ENCODE measurements at regions of chr12 and their contacts with region 1.

Region 1: DNA sequence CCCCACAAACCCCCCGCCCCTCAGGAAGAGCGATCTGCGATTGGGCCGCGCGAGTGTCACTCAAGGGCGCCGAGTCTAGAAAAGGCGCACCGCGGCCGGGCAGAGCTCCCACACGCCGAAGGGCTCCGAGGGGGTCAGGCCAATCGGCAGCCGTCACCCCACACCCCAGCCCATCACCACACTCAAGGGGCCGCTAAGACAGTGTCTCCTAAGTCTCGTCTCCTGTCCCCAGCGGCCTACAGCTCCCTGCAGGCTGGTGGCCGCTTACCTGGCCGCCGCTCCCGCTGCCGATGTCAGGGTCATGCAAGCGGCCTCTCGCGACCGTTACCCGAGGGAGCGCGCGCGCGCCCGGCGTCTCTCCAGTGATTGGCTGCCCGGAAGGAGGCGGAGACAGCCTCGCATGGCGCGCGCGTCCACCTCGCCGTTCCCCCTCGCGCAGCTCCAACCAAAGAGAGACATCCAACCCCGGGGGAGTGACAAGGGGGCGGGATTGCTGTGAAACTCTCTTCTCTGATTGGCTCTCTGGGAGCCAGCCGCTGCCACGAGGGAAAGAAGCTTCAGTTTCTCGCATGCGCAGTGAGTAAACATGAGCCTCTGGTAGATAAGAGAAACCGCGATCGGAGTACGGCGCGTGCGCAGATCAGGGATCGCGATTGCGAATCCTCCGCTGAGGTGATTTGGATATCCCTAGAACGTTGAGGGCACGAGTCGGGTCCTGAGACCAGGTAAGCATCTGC is at the starts of genes MPHOSPH9 and MTRFR:
- DNase-seq: peak; percentile 100
- ATAC-seq: peak; percentile 90
- H3K4me3 ChIP-seq: peak within 1 kb of the TSS; percentile 88 to 99 (median 96)
- H3K4me3 Mint-ChIP-seq: peak within 1 kb of the TSS; percentile 92
- H3K27ac ChIP-seq: peak within 1 kb of the TSS; percentile 84 to 93
- H3K27ac Mint-ChIP-seq: peak within 1 kb of the TSS; percentile 95
- H3K4me1 ChIP-seq: peaks cover 53 to 61% of the 10 kb centered on the region in 2 donors
- H3K4me1 Mint-ChIP-seq: peaks cover 67% of the 10 kb centered on the region
- H3K27me3 ChIP-seq: no peaks in the 10 kb centered on the region
- H3K27me3 Mint-ChIP-seq: no peaks in the 10 kb centered on the region
- CTCF ChIP-seq: no peak
- total RNA-seq, gene MPHOSPH9: 40.4 and 45.1 TPM in 2 replicates
- total RNA-seq, gene MTRFR: 45.5 and 49.0 TPM in 2 replicates

Region 2: DNA sequence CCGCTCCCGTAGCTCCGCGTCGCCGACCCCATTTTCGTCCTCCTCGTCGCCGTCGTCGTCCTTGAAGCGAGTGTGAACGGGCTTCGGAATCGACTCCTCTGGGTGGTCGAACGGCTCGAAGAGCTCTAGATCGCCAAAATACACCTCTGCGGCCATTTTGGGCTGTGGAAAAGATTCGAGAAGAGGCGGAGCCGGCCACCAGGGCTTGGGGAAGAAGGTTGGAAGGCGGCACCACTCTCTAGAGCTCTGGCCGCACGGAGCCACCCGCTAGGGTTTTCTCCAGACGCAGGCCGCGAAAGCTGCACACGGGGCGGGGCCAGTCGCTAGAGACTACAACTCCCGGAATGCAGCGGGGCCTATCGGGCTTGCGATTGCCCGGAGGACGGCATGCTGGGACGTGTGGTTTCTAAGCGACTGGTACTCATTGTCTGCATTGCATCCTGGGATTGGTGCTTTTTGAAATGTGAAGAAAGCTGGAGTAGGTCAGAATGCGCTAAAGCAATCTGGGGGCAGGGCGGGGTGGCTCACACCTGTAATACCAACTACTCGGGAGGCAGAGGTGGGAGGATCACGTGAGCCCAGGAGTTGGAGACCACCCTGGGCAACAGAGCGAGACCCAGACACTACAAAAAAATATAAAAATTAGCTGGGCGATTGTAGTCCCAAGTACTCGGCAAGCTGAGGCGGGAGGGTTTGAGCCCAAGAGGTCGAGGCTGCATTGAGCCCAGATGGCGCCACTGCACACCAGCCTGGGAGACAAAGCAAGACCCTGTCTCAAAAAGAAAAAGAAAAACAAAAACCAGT is 732.1 kb before region 1 on chr12 and contains the start of gene ZCCHC8:
- CTCF ChIA-PET with region 1: no interaction called
- POLR2A ChIA-PET with region 1: interaction called, 14 read pairs
- intact Hi-C with region 1: loop called (anchors 1 kb)
- DNase-seq: peak; percentile 97
- ATAC-seq: peak; percentile 91
- H3K4me3 ChIP-seq: peak within 1 kb of the TSS; percentile 71 to 93 (median 84)
- H3K4me3 Mint-ChIP-seq: peak within 1 kb of the TSS; percentile 83
- H3K27ac ChIP-seq: peak within 1 kb of the TSS; percentile 79 to 93
- H3K27ac Mint-ChIP-seq: peak within 1 kb of the TSS; percentile 87
- H3K4me1 ChIP-seq: peaks cover 15 to 30% of the 10 kb centered on the region in 2 donors
- H3K4me1 Mint-ChIP-seq: peaks cover 36% of the 10 kb centered on the region
- H3K27me3 ChIP-seq: no peaks in the 10 kb centered on the region
- H3K27me3 Mint-ChIP-seq: no peaks in the 10 kb centered on the region
- CTCF ChIP-seq: no peak
- total RNA-seq, gene ZCCHC8: 56.2 and 57.0 TPM in 2 replicates

Region 3: GRCh38 chr12:122860346-122861090 is 372.5 kb before region 1 on chr12:
- CTCF ChIA-PET with region 1: interaction called, 18 read pairs
- POLR2A ChIA-PET with region 1: interaction called, 5 read pairs
- intact Hi-C with region 1: loop called (anchors 5 kb)
- DNase-seq: peak; percentile 86
- ATAC-seq: peak; percentile 59
- H3K4me3 ChIP-seq: no peak overlapping the region
- H3K4me3 Mint-ChIP-seq: no peak overlapping the region
- H3K27ac ChIP-seq: peak overlapping the region in 1 of 2 donors; percentile 43
- H3K27ac Mint-ChIP-seq: peak overlapping the region; percentile 73
- H3K4me1 ChIP-seq: peaks cover 27 to 48% of the 10 kb centered on the region in 2 donors
- H3K4me1 Mint-ChIP-seq: peaks cover 46% of the 10 kb centered on the region
- H3K27me3 ChIP-seq: no peaks in the 10 kb centered on the region
- H3K27me3 Mint-ChIP-seq: no peaks in the 10 kb centered on the region
- CTCF ChIP-seq: peak; percentile 82

Region 4: DNA sequence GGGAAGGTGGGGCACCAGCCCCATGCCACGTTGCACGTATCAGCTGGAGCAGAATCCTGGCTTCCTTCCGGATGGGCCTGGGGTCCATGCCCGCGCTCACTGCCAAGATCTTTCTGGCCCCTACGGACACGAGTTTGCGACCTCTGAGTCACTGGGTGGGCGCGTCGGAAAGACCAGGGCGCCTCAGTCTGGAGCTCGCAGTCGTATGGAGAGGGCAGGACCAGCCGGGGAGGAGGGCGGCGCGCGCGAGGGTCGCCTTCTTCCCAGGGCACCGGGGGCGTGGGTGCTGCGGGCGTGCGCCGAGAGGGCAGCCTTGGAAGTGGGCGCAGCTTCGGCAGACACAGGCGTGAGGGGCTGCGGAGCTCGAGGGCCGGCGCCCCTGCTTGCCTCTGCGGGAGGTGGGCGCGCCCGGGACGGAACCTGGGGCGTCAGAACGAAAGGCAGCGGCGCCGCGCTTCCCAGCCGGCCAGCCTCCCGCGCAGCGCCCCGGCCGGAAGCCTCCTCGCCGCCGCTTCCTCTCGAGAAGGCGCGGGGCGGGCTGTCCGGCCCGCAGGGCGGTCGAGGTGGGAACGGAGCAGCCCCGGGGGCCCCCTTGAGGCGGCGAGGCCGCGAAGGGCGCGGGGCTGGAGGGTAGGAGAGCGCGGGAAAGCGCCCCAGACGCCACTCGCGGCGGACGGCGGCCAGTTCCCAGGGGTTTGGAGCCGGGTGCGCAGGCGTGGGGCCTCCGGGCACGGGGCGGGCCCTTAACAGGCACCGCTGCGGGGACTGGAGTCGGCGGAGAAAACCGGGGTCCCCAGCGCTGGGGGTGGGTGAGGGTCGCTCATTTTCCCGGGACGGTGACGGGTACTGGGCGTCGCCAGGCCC is 252.6 kb before region 1 on chr12 and contains the start of gene ARL6IP4:
- CTCF ChIA-PET with region 1: interaction called, 24 read pairs
- POLR2A ChIA-PET with region 1: interaction called, 14 read pairs
- intact Hi-C with region 1: no loop called
- DNase-seq: peak; percentile 79
- ATAC-seq: peak; percentile 77
- H3K4me3 ChIP-seq: peak within 1 kb of the TSS; percentile 63 to 88 (median 72)
- H3K4me3 Mint-ChIP-seq: peak within 1 kb of the TSS; percentile 91
- H3K27ac ChIP-seq: peak within 1 kb of the TSS; percentile 34 to 77
- H3K27ac Mint-ChIP-seq: peak within 1 kb of the TSS; percentile 89
- H3K4me1 ChIP-seq: peaks cover 34 to 63% of the 10 kb centered on the region in 2 donors
- H3K4me1 Mint-ChIP-seq: peaks cover 61% of the 10 kb centered on the region
- H3K27me3 ChIP-seq: no peaks in the 10 kb centered on the region
- H3K27me3 Mint-ChIP-seq: no peaks in the 10 kb centered on the region
- CTCF ChIP-seq: no peak
- total RNA-seq, gene ARL6IP4: 153 and 165 TPM in 2 replicates

Region 5: DNA sequence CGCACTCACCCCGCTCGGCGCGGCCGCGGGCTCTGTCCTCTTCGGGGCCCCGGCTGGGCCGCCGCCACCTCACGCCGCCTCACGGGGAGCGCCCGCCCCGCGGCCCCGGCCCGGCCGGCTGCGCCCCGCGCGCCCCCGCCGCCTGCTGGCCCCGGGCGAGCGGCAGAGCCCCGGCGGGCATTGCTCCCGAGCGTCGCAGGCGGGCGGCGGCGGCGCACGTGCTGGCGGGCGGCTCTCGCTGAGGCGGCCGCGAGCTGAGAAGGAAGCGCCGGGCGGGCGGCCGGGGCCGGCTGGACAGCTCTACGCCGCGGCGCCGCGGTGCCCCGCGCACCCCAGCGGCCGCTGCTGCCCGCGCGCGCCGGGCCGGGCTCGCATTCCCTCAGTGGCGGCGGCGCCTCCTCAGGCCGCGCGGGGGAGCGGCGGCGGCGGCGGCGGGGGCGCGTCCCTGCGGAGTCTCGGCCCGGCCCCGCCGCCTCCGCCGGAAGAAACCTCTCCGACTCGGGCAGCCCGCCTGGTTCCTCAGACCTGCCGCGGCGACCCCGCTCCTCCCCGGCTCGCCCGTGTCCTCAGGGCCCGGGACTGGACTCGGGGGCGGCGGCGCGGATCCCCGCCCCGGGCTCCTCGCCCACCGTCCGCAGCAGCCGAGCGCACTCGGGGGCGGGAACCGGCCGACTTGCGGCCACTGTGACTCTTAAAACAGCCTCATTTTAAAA is 82.1 kb before region 1 on chr12 and contains the start of gene PITPNM2:
- CTCF ChIA-PET with region 1: interaction called, 9 read pairs
- POLR2A ChIA-PET with region 1: interaction called, 7 read pairs
- intact Hi-C with region 1: loop called (anchors 1 kb)
- DNase-seq: peak; percentile 80
- ATAC-seq: peak; percentile 85
- H3K4me3 ChIP-seq: peak within 1 kb of the TSS; percentile 45 to 78 (median 68)
- H3K4me3 Mint-ChIP-seq: peak within 1 kb of the TSS; percentile 86
- H3K27ac ChIP-seq: peak within 1 kb of the TSS in 1 of 2 donors; percentile 78
- H3K27ac Mint-ChIP-seq: peak within 1 kb of the TSS; percentile 83
- H3K4me1 ChIP-seq: peaks cover 10 to 29% of the 10 kb centered on the region in 2 donors
- H3K4me1 Mint-ChIP-seq: peaks cover 24% of the 10 kb centered on the region
- H3K27me3 ChIP-seq: peaks cover 0 to 7% (median 2%) of the 10 kb centered on the region in 4 experiments
- H3K27me3 Mint-ChIP-seq: no peaks in the 10 kb centered on the region
- CTCF ChIP-seq: no peak
- total RNA-seq, gene PITPNM2: 28.6 and 30.3 TPM in 2 replicates

Region 6: GRCh38 chr12:123365025-123365917 is 132.3 kb after region 1 on chr12:
- CTCF ChIA-PET with region 1: interaction called, 6 read pairs
- POLR2A ChIA-PET with region 1: interaction called, 8 read pairs
- intact Hi-C with region 1: loop called (anchors 1 kb)
- DNase-seq: peak; percentile 99
- ATAC-seq: peak; percentile 70
- H3K4me3 ChIP-seq: peak overlapping the region; percentile 68 to 90 (median 80)
- H3K4me3 Mint-ChIP-seq: peak overlapping the region; percentile 87
- H3K27ac ChIP-seq: peak overlapping the region; percentile 99
- H3K27ac Mint-ChIP-seq: peak overlapping the region; percentile 95
- H3K4me1 ChIP-seq: peaks cover 17 to 23% of the 10 kb centered on the region in 2 donors
- H3K4me1 Mint-ChIP-seq: peaks cover 16% of the 10 kb centered on the region
- H3K27me3 ChIP-seq: no peaks in the 10 kb centered on the region
- H3K27me3 Mint-ChIP-seq: no peaks in the 10 kb centered on the region
- CTCF ChIP-seq: peak; percentile 84